MCF 10A (cell line): ENCODE measurements at regions of chr5 and their contacts with region 1.

Region 1: GRCh38 chr5:145811834-145812625 is 23.1 kb downstream of the PRELID2 start:
- DNase-seq: peak; percentile 60
- H3K4me3 Mint-ChIP-seq: no peak overlapping the region
- H3K27ac Mint-ChIP-seq: no peak overlapping the region
- H3K4me1 Mint-ChIP-seq: no peaks in the 10 kb centered on the region
- H3K27me3 Mint-ChIP-seq: no peaks in the 10 kb centered on the region
- CTCF ChIP-seq: peak; percentile 45

Region 2: GRCh38 chr5:145681686-145682085 is 130.3 kb before region 1 on chr5:
- CTCF ChIA-PET with region 1: interaction called, 16 read pairs
- POLR2A ChIA-PET with region 1: no interaction called
- intact Hi-C with region 1: loop called (anchors 1 kb)
- DNase-seq: peak; percentile 94
- H3K4me3 Mint-ChIP-seq: no peak overlapping the region
- H3K27ac Mint-ChIP-seq: no peak overlapping the region
- H3K4me1 Mint-ChIP-seq: no peaks in the 10 kb centered on the region
- H3K27me3 Mint-ChIP-seq: no peaks in the 10 kb centered on the region
- CTCF ChIP-seq: peak; percentile 87

Region 3: DNA sequence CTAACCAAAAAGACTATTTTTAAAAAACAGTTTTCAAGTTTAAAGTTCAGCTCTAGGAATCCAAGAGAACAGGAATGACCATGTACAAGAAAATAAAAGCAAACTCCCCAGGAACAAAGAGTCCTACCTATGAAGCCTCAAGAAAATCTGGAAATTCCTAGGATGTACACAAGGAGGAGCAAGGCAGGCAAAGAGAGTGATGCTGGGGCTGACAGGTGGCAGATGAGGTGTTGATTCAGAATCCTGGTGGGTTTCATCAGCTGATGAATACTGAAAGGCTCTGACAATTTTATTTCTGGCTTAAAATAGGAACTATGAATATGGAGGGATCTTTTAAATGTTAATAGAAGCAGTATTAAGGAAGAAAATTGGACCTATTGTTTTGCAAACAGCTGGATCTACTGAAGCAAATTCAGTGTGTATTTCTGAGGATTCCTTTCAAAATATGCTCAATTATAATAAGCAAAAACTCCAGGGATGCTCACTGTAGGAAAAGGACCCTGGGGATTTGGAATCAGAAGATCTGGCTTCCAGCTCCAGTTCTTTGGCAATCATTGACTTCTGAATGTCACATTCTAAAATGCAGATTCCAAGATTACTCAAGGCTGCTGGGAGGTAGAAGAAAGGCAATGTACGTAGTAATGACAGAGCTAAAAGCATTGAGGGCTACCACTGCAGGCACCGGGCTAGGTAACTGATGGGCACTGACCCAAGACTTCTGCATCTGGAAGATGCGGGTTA is 96.3 kb after region 1 on chr5:
- CTCF ChIA-PET with region 1: no interaction called
- POLR2A ChIA-PET with region 1: no interaction called
- intact Hi-C with region 1: no loop called
- DNase-seq: peak; percentile 51
- H3K4me3 Mint-ChIP-seq: no peak overlapping the region
- H3K27ac Mint-ChIP-seq: no peak overlapping the region
- H3K4me1 Mint-ChIP-seq: peaks cover 5% of the 10 kb centered on the region
- H3K27me3 Mint-ChIP-seq: no peaks in the 10 kb centered on the region
- CTCF ChIP-seq: peak; percentile 62